CD8-positive, alpha-beta T cell (primary cell): ENCODE measurements at regions of chr4 and their contacts with region 1.

Region 1: DNA sequence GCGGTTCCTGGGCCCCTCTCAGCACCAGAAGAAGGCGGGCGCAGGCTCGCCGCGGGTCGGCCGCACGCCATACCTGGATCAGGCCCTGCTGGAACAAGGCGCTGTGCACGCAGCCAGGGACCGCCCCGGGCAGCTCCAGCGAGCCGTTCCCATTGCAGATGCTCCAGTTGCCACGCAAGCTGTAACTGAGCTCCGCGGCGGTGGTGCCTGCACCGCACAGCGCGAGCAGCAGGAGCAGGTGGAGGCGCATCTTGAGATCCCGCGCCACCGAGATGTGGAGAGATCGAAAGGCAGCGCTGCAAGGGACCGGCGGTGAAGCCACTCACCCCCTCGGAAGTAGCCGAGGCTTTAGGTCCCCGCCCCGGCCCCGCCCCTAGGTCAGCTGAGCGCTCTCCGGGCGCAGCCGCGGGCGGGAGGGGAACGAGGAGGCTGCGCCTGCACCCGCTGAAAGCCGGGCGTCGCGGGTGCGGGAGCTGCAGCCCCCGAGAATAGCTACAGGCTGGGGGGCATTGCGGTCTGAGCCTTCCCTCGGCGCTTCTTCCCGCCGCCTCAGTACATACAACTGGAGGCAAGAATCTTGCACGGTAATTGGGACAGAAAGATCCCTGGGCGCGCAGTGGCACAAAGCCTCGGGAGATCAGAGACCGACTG is at the start of gene MANBA:
- DNase-seq: peak; percentile 67 to 90 (median 84)
- ATAC-seq: peak; percentile 83
- H3K4me3 ChIP-seq: peak within 1 kb of the TSS; percentile 88 to 93
- H3K4me3 Mint-ChIP-seq: peak within 1 kb of the TSS; percentile 96
- H3K27ac ChIP-seq: peak within 1 kb of the TSS; percentile 62 to 65
- H3K27ac Mint-ChIP-seq: peak within 1 kb of the TSS; percentile 94
- H3K4me1 ChIP-seq: peaks cover 10% of the 10 kb centered on the region
- H3K4me1 Mint-ChIP-seq: peaks cover 42% of the 10 kb centered on the region
- H3K27me3 ChIP-seq: no peaks in the 10 kb centered on the region
- H3K27me3 Mint-ChIP-seq: no peaks in the 10 kb centered on the region
- CTCF ChIP-seq: no peak
- total RNA-seq, gene MANBA: 22.5 to 24.1 TPM

Region 2: DNA sequence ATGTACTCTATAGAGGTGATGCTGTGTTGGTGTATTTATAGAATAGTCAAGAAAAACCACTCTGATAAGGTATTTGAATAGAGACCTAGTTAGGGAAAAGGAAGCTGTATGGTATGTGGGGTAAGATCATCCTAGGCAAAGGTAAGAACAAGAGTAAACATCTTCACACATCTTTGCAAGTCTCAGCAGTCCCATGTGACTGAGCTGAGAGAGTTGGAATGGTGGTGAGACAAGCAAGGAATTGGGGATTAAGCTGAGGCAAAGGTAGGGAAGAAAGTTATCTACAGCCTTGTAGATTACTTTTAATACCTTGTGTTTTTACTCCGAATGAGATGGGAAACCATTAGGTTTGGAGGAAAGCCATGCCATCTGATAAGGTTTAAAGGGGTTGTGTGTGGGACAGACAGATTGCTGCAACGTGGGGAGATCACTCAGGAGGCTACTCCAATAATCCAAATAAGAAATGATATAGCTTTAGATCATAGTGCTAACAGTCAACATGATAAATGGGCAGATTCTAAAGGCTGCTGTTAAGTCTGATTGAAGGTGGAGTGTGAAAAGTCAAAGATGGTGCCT is 31.7 kb after region 1 on chr4:
- CTCF ChIA-PET with region 1: no interaction called
- POLR2A ChIA-PET with region 1: no interaction called
- intact Hi-C with region 1: loop called in 1 of 2 experiments (anchors 2 kb)
- DNase-seq: no peak
- ATAC-seq: peak; percentile 18
- H3K4me3 ChIP-seq: no peak overlapping the region
- H3K4me3 Mint-ChIP-seq: no peak overlapping the region
- H3K27ac ChIP-seq: no peak overlapping the region
- H3K27ac Mint-ChIP-seq: peak overlapping the region; percentile 8
- H3K4me1 ChIP-seq: no peaks in the 10 kb centered on the region
- H3K4me1 Mint-ChIP-seq: peaks cover 25% of the 10 kb centered on the region
- H3K27me3 ChIP-seq: no peaks in the 10 kb centered on the region
- H3K27me3 Mint-ChIP-seq: no peaks in the 10 kb centered on the region
- CTCF ChIP-seq: no peak